Thyroid gland (tissue), 4 donors: ENCODE measurements at regions of chr10 and their contacts with region 1.

Region 1: GRCh38 chr10:124827474-124827873 is 25.9 kb downstream of the ABRAXAS2 start:
- DNase-seq: no peak
- H3K4me3 ChIP-seq: no peak overlapping the region
- H3K27ac ChIP-seq: no peak overlapping the region
- H3K4me1 ChIP-seq: no peaks in the 10 kb centered on the region
- H3K27me3 ChIP-seq: no peaks in the 10 kb centered on the region
- CTCF ChIP-seq: peak in 4 of 6 experiments; percentile 12 to 50 (median 46)
- POLR2A ChIP-seq: no peak

Region 2: DNA sequence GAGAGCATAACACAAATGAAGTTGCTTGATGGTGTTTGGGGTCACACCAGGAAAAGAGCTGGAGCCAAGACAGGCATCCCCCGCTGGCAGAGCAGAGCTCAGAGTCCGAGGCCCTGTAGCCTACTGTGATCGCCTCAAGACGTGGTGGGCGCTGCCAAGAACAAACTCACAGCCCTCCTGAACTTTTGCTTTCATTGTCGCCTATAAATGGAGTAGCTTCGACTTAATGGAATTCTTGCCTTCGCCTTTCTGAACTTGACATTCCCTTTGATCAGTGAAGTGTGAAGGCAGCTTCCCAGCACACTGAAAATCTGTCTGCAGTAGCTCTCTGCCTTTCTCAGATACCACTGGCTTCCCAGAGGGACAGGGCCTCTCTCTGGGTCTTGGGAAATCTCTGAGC is 957.2 kb before region 1 on chr10:
- intact Hi-C with region 1: no loop called
- DNase-seq: peak; percentile 67 to 71
- H3K4me3 ChIP-seq: no peak overlapping the region
- H3K27ac ChIP-seq: peak overlapping the region; percentile 9 to 51 (median 38)
- H3K4me1 ChIP-seq: peaks cover 32 to 34% of the 10 kb centered on the region in 2 donors
- H3K27me3 ChIP-seq: no peaks in the 10 kb centered on the region
- CTCF ChIP-seq: no peak
- POLR2A ChIP-seq: no peak

Region 3: DNA sequence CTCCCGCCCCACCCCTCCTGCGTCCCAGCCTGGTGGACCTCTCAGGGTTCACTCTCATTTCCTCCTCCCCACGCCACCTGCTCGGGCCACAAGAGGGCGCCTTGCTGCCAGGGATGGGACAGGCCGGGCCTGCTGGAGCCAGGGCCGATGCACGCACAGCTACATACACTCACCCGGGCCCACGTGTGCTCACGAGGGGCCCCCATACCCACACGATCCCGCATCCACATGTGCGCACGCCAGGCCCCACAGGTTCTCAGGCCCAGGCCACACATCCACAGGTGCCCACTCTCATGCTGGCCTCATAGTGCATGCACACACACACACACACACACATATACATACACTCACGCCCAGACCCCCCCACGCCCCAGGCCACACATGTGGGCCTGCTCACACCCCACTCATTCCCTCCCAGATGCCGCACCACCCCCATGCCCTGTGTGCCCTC is 297.2 kb before region 1 on chr10:
- intact Hi-C with region 1: loop called (anchors 10 kb)
- DNase-seq: peak; percentile 86 to 89
- H3K4me3 ChIP-seq: no peak overlapping the region
- H3K27ac ChIP-seq: no peak overlapping the region
- H3K4me1 ChIP-seq: peaks cover 0 to 8% of the 10 kb centered on the region in 2 donors
- H3K27me3 ChIP-seq: no peaks in the 10 kb centered on the region
- CTCF ChIP-seq: peak; percentile 61 to 94 (median 86)
- POLR2A ChIP-seq: no peak

Region 4: GRCh38 chr10:125363791-125364190 is 536.3 kb after region 1 on chr10:
- intact Hi-C with region 1: no loop called
- DNase-seq: no peak
- H3K4me3 ChIP-seq: no peak overlapping the region
- H3K27ac ChIP-seq: no peak overlapping the region
- H3K4me1 ChIP-seq: no peaks in the 10 kb centered on the region
- H3K27me3 ChIP-seq: no peaks in the 10 kb centered on the region
- CTCF ChIP-seq: no peak
- POLR2A ChIP-seq: no peak